ENCODE measurements at regions of chr17 and their contacts with region 1.

Region 1: DNA sequence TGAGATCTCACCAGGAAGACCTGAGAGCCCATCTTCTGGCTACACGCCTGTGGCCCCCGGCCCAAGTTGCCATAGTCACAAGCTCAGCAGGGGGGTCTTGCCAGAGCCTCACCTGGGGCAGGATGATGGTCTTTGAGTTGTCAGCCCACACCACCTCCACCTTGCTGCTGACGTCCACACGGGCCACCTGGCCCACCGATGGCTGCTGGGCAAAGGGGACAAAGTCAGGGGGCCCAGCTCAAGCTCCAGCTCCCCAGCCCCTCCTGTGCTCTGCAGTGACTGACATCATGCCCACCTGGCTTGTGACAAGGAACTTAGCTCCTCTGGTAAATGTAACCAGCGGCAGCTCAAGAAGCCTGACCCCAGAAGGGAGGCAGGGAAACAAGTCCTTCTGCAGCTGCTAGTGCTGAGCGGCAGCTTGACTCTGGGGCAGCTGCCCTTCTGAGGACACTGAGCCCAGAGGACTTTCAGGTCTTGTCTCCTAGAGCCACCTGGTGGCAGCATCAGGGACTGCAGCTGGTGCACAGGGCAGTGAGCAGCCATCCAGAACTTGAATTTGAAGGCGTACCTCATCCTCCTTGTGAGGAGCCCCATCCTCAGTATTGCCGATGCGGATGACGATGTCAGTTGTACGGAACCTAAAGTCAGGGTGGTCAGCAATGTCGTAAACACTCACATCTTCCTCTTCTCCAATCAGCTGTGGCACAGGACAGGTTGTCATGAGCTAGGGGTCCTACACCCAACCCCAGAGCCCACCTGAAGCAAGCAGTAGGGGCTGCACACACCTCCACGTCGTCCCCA is 13.5 kb downstream of the SPHK1 start:
- DNase-seq: peak; percentile 92
- ATAC-seq: peak; percentile 92
- H3K4me3 Mint-ChIP-seq: no peak overlapping the region
- H3K27ac Mint-ChIP-seq: no peak overlapping the region
- H3K4me1 Mint-ChIP-seq: no peaks in the 10 kb centered on the region
- H3K27me3 Mint-ChIP-seq: no peaks in the 10 kb centered on the region

Region 2: GRCh38 chr17:76327696-76328095 is 70.2 kb before region 1 on chr17:
- CTCF ChIA-PET with region 1: interaction called, 11 read pairs
- POLR2A ChIA-PET with region 1: no interaction called
- intact Hi-C with region 1: no loop called
- DNase-seq: no peak
- ATAC-seq: no peak
- H3K4me3 Mint-ChIP-seq: no peak overlapping the region
- H3K27ac Mint-ChIP-seq: no peak overlapping the region
- H3K4me1 Mint-ChIP-seq: no peaks in the 10 kb centered on the region
- H3K27me3 Mint-ChIP-seq: no peaks in the 10 kb centered on the region

Region 3: GRCh38 chr17:76353599-76354316 is 44.1 kb before region 1 on chr17 and contains the start of gene PRPSAP1:
- CTCF ChIA-PET with region 1: interaction called, 19 read pairs
- POLR2A ChIA-PET with region 1: no interaction called
- intact Hi-C with region 1: no loop called
- DNase-seq: peak; percentile 88
- ATAC-seq: peak; percentile 97
- H3K4me3 Mint-ChIP-seq: peak within 1 kb of the TSS; percentile 78
- H3K27ac Mint-ChIP-seq: peak within 1 kb of the TSS; percentile 96
- H3K4me1 Mint-ChIP-seq: peaks cover 18% of the 10 kb centered on the region
- H3K27me3 Mint-ChIP-seq: no peaks in the 10 kb centered on the region
- total RNA-seq, gene PRPSAP1: 26.7 to 34.9 TPM

Region 4: DNA sequence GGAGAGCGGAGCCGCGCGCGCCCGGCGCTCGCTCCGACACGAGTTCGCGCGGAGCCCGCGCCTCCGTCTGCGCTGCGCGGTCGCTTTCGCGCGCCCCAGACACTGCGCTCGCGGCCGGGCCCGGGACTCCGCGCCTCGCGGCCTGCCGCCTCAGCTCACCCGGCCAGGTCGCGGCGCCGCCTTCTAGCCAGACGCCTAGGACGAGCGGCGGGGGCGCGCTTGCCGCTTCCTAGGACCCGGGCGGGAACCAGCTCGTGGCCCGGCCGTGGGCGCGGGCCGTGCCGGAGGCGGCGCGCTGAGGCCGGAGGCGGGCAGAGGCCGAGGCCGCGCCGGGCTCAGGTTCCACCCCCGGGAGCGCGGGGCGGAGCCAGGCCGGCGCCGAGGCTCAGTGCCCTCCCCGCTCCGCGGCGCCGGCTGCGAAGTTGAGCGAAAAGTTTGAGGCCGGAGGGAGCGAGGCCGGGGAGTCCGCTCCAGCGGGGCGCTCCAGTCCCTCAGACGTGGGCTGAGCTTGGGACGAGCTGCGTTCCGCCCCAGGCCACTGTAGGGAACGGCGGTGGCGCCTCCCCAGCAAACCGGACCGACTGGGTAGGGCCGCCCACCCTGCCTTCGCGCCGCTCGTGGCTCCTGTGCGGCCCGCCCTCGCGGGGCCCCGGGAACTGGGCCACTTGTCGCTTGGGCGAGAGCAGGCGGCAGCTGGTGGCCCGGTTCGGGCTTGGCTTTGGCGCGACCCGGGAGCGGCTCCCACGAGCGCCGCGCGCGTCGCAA is 13.5 kb before region 1 on chr17 and contains the start of gene SPHK1:
- CTCF ChIA-PET with region 1: interaction called, 34 read pairs
- POLR2A ChIA-PET with region 1: no interaction called
- intact Hi-C with region 1: no loop called
- DNase-seq: peak; percentile 86
- ATAC-seq: peak; percentile 72
- H3K4me3 Mint-ChIP-seq: peak within 1 kb of the TSS; percentile 85
- H3K27ac Mint-ChIP-seq: peak within 1 kb of the TSS; percentile 81
- H3K4me1 Mint-ChIP-seq: peaks cover 12% of the 10 kb centered on the region
- H3K27me3 Mint-ChIP-seq: no peaks in the 10 kb centered on the region
- total RNA-seq, gene SPHK1: 7.4 to 11.7 TPM

Region 5: GRCh38 chr17:76414334-76415295 is 16.7 kb after region 1 on chr17:
- CTCF ChIA-PET with region 1: interaction called, 34 read pairs
- POLR2A ChIA-PET with region 1: no interaction called
- intact Hi-C with region 1: no loop called
- DNase-seq: no peak
- ATAC-seq: no peak
- H3K4me3 Mint-ChIP-seq: no peak overlapping the region
- H3K27ac Mint-ChIP-seq: no peak overlapping the region
- H3K4me1 Mint-ChIP-seq: peaks cover 8% of the 10 kb centered on the region
- H3K27me3 Mint-ChIP-seq: no peaks in the 10 kb centered on the region

Measured in activated CD4-positive, alpha-beta T cell treated with anti-CD3 and anti-CD28 coated beads for 36 hours (primary cell).